Naive thymus-derived CD4-positive, alpha-beta T cell (primary cell): ENCODE measurements at regions of chr16 and their contacts with region 1.

Region 1: DNA sequence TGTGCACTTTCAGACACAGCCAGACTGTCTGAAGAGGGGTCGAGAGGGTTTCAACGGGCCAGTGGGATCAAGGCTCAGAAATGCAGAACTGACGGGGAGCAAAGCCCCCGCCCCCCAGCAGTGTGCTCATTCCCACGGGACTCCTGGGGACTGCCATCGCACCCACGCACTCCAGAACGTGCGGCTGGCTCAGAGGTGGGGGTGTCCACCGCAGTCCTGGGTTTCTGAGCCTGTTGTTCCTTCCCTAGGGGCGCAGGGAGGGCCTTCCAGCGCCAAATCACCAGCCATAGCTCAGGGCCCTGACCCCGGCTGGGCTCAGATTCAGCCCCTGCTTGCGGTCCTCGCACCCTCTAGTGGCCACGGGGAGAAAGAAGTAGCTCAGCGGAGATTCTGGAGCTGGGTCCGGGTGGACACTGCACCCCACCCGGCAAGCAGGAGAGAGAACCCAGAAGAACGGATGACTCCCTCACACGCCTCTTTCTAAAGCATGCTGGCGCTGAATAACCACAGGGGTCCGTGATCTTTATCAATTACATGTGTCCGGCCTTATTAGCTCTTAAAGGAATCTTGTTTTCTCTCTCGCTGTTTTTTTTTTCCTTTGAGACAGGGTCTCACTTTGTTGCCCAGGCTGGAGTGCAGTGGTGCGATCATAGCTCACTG is 45.0 kb upstream of the USP7 start:
- DNase-seq: peak; percentile 30 to 66 (median 57)
- ATAC-seq: peak; percentile 93
- H3K4me3 ChIP-seq: no peak overlapping the region
- H3K4me3 Mint-ChIP-seq: peak overlapping the region in 4 of 10 donors; percentile 49 to 67 (median 58)
- H3K27ac ChIP-seq: no peak overlapping the region
- H3K27ac Mint-ChIP-seq: no peak overlapping the region
- H3K4me1 ChIP-seq: peaks cover 0 to 6% of the 10 kb centered on the region in 2 donors
- H3K4me1 Mint-ChIP-seq: peaks cover 0 to 4% (median 3%) of the 10 kb centered on the region in 7 donors
- H3K27me3 ChIP-seq: no peaks in the 10 kb centered on the region
- H3K27me3 Mint-ChIP-seq: peaks cover 4 to 19% (median 8%) of the 10 kb centered on the region in 5 donors

Region 2: GRCh38 chr16:8892101-8892575 is 116.6 kb before region 1 on chr16:
- CTCF ChIA-PET with region 1: interaction called, 5 read pairs
- POLR2A ChIA-PET with region 1: no interaction called
- intact Hi-C with region 1: loop called in 1 of 2 experiments (anchors 5 kb)
- DNase-seq: no peak
- ATAC-seq: no peak
- H3K4me3 ChIP-seq: no peak overlapping the region
- H3K4me3 Mint-ChIP-seq: no peak overlapping the region
- H3K27ac ChIP-seq: no peak overlapping the region
- H3K27ac Mint-ChIP-seq: peak overlapping the region in 4 of 9 donors; percentile 37 to 86 (median 52)
- H3K4me1 ChIP-seq: no peaks in the 10 kb centered on the region
- H3K4me1 Mint-ChIP-seq: peaks cover 0 to 4% (median 0%) of the 10 kb centered on the region in 7 donors
- H3K27me3 ChIP-seq: no peaks in the 10 kb centered on the region
- H3K27me3 Mint-ChIP-seq: no peaks in the 10 kb centered on the region

Region 3: GRCh38 chr16:8905168-8905762 is 103.5 kb before region 1 on chr16:
- CTCF ChIA-PET with region 1: interaction called, 8 read pairs
- POLR2A ChIA-PET with region 1: no interaction called
- intact Hi-C with region 1: loop called (anchors 1 to 2 kb)
- DNase-seq: peak in 4 of 9 donors; percentile 18 to 39 (median 30)
- ATAC-seq: peak; percentile 63
- H3K4me3 ChIP-seq: no peak overlapping the region
- H3K4me3 Mint-ChIP-seq: no peak overlapping the region
- H3K27ac ChIP-seq: no peak overlapping the region
- H3K27ac Mint-ChIP-seq: peak overlapping the region in 3 of 9 donors; percentile 29 to 59 (median 42)
- H3K4me1 ChIP-seq: peaks cover 0 to 7% of the 10 kb centered on the region in 2 donors
- H3K4me1 Mint-ChIP-seq: peaks cover 6 to 29% (median 16%) of the 10 kb centered on the region in 7 donors
- H3K27me3 ChIP-seq: no peaks in the 10 kb centered on the region
- H3K27me3 Mint-ChIP-seq: no peaks in the 10 kb centered on the region

Region 4: GRCh38 chr16:8936421-8936820 is 72.3 kb before region 1 on chr16:
- CTCF ChIA-PET with region 1: interaction called, 22 read pairs
- POLR2A ChIA-PET with region 1: no interaction called
- intact Hi-C with region 1: loop called (anchors 1 kb)
- DNase-seq: peak; percentile 29 to 75 (median 60)
- ATAC-seq: peak; percentile 94
- H3K4me3 ChIP-seq: no peak overlapping the region
- H3K4me3 Mint-ChIP-seq: peak overlapping the region in 8 of 10 donors; percentile 3 to 60 (median 38)
- H3K27ac ChIP-seq: no peak overlapping the region
- H3K27ac Mint-ChIP-seq: peak overlapping the region in 6 of 9 donors; percentile 21 to 87 (median 63)
- H3K4me1 ChIP-seq: peaks cover 35 to 43% of the 10 kb centered on the region in 2 donors
- H3K4me1 Mint-ChIP-seq: peaks cover 54 to 98% (median 93%) of the 10 kb centered on the region in 7 donors
- H3K27me3 ChIP-seq: no peaks in the 10 kb centered on the region
- H3K27me3 Mint-ChIP-seq: no peaks in the 10 kb centered on the region

Region 5: GRCh38 chr16:8958344-8959167 is 50.2 kb before region 1 on chr16:
- CTCF ChIA-PET with region 1: no interaction called
- POLR2A ChIA-PET with region 1: no interaction called
- intact Hi-C with region 1: loop called in 1 of 2 experiments (anchors 2 kb)
- DNase-seq: peak in 1 of 9 donors; percentile 20
- ATAC-seq: peak; percentile 6
- H3K4me3 ChIP-seq: peak overlapping the region; percentile 46
- H3K4me3 Mint-ChIP-seq: peak overlapping the region; percentile 79 to 98 (median 93)
- H3K27ac ChIP-seq: peak overlapping the region; percentile 14
- H3K27ac Mint-ChIP-seq: peak overlapping the region; percentile 36 to 94 (median 79)
- H3K4me1 ChIP-seq: peaks cover 70 to 76% of the 10 kb centered on the region in 2 donors
- H3K4me1 Mint-ChIP-seq: peaks cover 64 to 83% (median 76%) of the 10 kb centered on the region in 7 donors
- H3K27me3 ChIP-seq: no peaks in the 10 kb centered on the region
- H3K27me3 Mint-ChIP-seq: no peaks in the 10 kb centered on the region